H1 (cell line): ENCODE measurements at regions of chr9 and their contacts with region 1.

Region 1: DNA sequence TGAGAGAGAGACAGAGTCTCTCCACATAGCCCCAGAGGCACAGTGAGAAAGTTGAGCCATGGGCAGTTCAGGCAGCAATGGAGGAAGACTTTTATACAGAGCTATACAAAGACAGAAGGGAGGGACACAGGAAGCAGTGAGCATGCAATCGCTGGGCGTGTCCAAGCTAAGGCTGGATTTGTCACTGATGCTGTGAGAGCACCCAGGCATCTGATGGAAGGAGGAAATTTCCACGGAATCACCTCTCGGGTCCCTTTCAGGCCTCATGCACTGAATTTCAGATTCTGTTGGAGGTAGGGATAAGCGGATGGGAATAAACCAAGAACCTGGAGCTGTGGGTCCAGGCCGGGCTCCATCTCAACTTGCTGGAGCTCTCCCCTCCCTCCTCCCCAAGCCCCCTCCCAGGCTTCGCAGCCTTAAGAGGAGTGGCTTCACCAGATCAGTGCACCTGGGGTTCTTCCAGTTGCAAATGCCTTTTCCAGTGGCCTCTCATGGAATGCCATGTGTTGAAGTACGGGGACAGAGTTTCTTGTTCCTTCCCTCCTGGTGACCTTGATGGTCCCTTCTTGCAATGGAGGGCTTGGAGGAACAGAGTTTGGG is 114.8 kb upstream of the ALDH1B1 start:
- DNase-seq: no peak
- H3K4me3 ChIP-seq: no peak overlapping the region
- H3K27ac ChIP-seq: no peak overlapping the region
- H3K4me1 ChIP-seq: peaks cover 0 to 8% (median 2%) of the 10 kb centered on the region in 4 experiments; a peak in 2 of 7 replicates
- H3K27me3 ChIP-seq: peaks cover 0 to 2% (median 0%) of the 10 kb centered on the region in 4 experiments; a peak in 2 of 7 replicates
- CTCF ChIP-seq: no peak
- EP300 ChIP-seq: no peak
- POLR2A ChIP-seq: no peak
- RAD21 ChIP-seq: no peak

Region 2: GRCh38 chr9:38263532-38263931 is 14.2 kb before region 1 on chr9:
- CTCF ChIA-PET with region 1: interaction called, 10 read pairs
- POLR2A ChIA-PET with region 1: no interaction called
- DNase-seq: no peak
- H3K4me3 ChIP-seq: no peak overlapping the region
- H3K27ac ChIP-seq: no peak overlapping the region
- H3K4me1 ChIP-seq: no peaks in the 10 kb centered on the region
- H3K27me3 ChIP-seq: peaks cover 0 to 3% (median 0%) of the 10 kb centered on the region in 4 experiments; a peak in 2 of 7 replicates
- CTCF ChIP-seq: peak in 2 of 3 experiments; percentile 43 to 57; a peak in 3 of 4 replicates
- EP300 ChIP-seq: no peak
- POLR2A ChIP-seq: no peak
- RAD21 ChIP-seq: peak; percentile 86 to 87